IMR-90 (cell line): ENCODE measurements at regions of chrX and their contacts with region 1.

Region 1: GRCh38 chrX:44669626-44670025 is 127.0 kb upstream of the FUNDC1 start:
- DNase-seq: no peak
- ATAC-seq: no peak
- H3K4me3 ChIP-seq: no peak overlapping the region
- H3K27ac ChIP-seq: no peak overlapping the region
- H3K4me1 ChIP-seq: no peaks in the 10 kb centered on the region
- H3K27me3 ChIP-seq: no peaks in the 10 kb centered on the region; the same call in 1 of the 2 replicates
- CTCF ChIP-seq: no peak
- POLR2A ChIP-seq: no peak
- RAD21 ChIP-seq: no peak

Region 2: GRCh38 chrX:44747969-44748368 is 78.3 kb after region 1 on chrX:
- CTCF ChIA-PET with region 1: no interaction called
- POLR2A ChIA-PET with region 1: no interaction called
- dilution Hi-C with region 1: no loop called
- in situ Hi-C with region 1: no loop called
- intact Hi-C with region 1: loop called (anchors 2 kb)
- DNase-seq: no peak
- ATAC-seq: no peak
- H3K4me3 ChIP-seq: no peak overlapping the region
- H3K27ac ChIP-seq: no peak overlapping the region
- H3K4me1 ChIP-seq: no peaks in the 10 kb centered on the region
- H3K27me3 ChIP-seq: peaks cover 2% of the 10 kb centered on the region
- CTCF ChIP-seq: no peak
- POLR2A ChIP-seq: no peak
- RAD21 ChIP-seq: no peak